ENCODE measurements at regions of chr7 and their contacts with region 1.

Region 1: GRCh38 chr7:70585071-70585470 is 546.9 kb upstream of the GALNT17 start:
- DNase-seq: peak; percentile 66
- H3K4me3 ChIP-seq: no peak overlapping the region
- H3K27ac ChIP-seq: peak overlapping the region in 1 of 2 experiments; percentile 94; a peak in 2 of 4 replicates
- H3K4me1 ChIP-seq: peaks cover 0 to 33% of the 10 kb centered on the region in 2 experiments; a peak in 2 of 4 replicates
- H3K27me3 ChIP-seq: no peaks in the 10 kb centered on the region
- CTCF ChIP-seq: peak; percentile 29
- EP300 ChIP-seq: no peak
- RAD21 ChIP-seq: peak; percentile 66

Region 2: DNA sequence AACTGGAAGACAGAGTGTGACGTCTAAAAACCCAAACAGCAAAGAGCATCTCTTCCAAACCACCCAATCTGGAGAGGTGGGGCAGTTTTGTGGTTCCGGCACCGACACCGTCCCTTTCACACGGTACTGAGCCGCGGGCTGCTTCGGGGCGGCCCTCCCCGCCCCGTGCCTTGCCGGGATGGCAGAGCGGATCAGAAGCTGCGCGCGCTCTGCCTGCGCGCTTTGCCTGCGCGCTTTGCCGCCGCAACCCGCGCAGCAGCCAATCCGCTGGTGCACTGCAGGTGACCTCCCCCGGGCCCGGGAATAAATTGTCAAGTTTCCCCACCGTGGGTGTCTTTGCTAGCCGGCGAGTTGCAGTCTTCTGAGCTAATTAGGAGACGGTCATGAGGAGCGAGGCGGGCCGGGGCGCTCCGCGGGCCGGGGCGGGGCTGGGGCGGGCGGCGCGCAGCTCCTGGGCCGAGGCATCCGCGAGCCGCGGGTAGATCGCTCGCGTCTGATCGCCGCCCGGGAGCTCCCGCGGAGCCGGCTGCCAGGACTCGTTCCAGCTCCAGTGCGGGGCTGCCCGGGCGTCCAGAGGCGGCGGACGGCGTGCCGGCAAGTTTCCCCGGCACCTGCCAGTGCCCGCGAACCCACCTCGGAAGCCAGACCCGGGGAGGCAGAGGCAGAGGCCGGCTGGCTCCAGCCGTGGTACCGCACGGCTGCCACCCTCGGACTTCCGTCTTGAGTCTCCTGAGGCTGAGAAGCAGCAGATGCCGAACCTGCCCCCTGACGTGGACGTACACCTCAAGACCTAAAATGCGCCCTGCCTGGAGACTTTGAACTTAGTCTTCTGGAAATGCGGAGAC is 10.9 kb after region 1 on chr7:
- CTCF ChIA-PET with region 1: interaction called, 36 read pairs
- POLR2A ChIA-PET with region 1: no interaction called
- DNase-seq: peak; percentile 89
- H3K4me3 ChIP-seq: peak overlapping the region; percentile 48 to 50
- H3K27ac ChIP-seq: no peak overlapping the region
- H3K4me1 ChIP-seq: peaks cover 0 to 27% of the 10 kb centered on the region in 2 experiments; a peak in 2 of 4 replicates
- H3K27me3 ChIP-seq: no peaks in the 10 kb centered on the region
- CTCF ChIP-seq: no peak
- EP300 ChIP-seq: no peak
- RAD21 ChIP-seq: no peak

Measured in SK-N-SH (cell line).